HAP-1 (cell line): ENCODE measurements at regions of chr10 and their contacts with region 1.

Region 1: GRCh38 chr10:35218339-35218955 is 91.8 kb downstream of the CREM start:
- DNase-seq: peak; percentile 69 to 88
- H3K4me3 ChIP-seq: no peak overlapping the region
- H3K4me1 ChIP-seq: peaks cover 3% of the 10 kb centered on the region; the same call in 1 of the 2 replicates
- H3K27me3 ChIP-seq: no peaks in the 10 kb centered on the region

Region 2: GRCh38 chr10:34666008-34666705 is 552.3 kb before region 1 on chr10:
- in situ Hi-C with region 1: loop called (anchors 25 kb)
- DNase-seq: peak; percentile 58 to 74
- H3K4me3 ChIP-seq: no peak overlapping the region
- H3K4me1 ChIP-seq: peaks cover 10% of the 10 kb centered on the region
- H3K27me3 ChIP-seq: no peaks in the 10 kb centered on the region

Region 3: GRCh38 chr10:34698983-34699382 is 519.5 kb before region 1 on chr10:
- in situ Hi-C with region 1: no loop called
- DNase-seq: no peak
- H3K4me3 ChIP-seq: no peak overlapping the region
- H3K4me1 ChIP-seq: peaks cover 9% of the 10 kb centered on the region
- H3K27me3 ChIP-seq: no peaks in the 10 kb centered on the region

Region 4: DNA sequence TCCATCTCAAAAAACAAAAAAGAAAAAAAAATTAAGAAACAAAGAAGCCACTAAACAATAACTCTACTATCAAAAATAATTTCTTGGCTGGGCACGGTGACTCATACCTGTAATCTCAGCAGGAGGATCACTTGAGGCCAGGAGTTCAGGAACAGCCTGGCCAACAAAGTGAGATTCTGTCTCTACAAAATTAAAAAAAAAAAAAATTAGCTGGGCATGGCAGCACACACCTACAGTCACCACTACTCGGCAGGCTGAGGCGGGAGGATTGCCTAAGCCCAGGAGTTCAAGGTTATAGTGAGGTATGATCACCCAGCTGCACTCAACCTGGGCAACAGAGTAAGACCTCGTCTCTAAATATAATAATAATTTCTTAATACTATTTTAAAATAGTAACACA is 472.4 kb before region 1 on chr10:
- in situ Hi-C with region 1: no loop called
- DNase-seq: no peak
- H3K4me3 ChIP-seq: no peak overlapping the region
- H3K4me1 ChIP-seq: no peaks in the 10 kb centered on the region
- H3K27me3 ChIP-seq: no peaks in the 10 kb centered on the region

Region 5: GRCh38 chr10:35119378-35119777 is 99.1 kb before region 1 on chr10:
- in situ Hi-C with region 1: loop called (anchors 5 kb)
- DNase-seq: no peak
- H3K4me3 ChIP-seq: no peak overlapping the region
- H3K4me1 ChIP-seq: no peaks in the 10 kb centered on the region
- H3K27me3 ChIP-seq: peaks cover 6% of the 10 kb centered on the region; the same call in 1 of the 2 replicates